Right lobe of liver (tissue), 6 donors: ENCODE measurements at regions of chr4 and their contacts with region 1.

Region 1: DNA sequence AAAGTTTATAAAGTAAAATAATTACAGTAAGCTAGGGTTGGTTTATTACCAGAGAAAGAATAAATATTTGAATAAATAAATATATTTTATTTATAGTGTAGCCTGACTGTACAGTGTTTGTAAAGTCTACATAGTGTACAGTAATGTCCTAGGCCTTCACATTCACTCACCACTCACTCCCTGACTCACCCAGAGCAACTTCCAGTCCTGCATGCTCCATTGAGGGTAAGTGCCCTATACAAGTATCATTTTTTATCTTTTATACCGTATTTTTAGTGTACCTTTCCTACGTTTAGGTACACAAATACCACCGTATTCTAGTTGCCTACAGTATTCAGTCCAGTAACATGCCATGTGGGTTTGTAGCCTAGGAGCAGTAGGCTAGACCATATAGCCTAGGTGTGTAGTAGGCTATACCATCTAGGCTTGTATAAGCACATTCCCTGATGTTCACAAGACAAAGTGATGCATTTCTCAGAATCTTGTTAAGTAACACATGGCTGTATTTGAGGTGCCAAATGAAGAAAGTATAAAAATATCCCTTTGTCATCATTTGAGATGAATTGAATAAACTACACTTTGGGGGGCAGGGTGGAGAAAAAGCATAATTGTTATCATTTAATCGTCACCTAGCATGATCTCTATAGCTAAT is 14.7 kb upstream of the KLHL8 start:
- DNase-seq: no peak
- ATAC-seq: no peak
- H3K4me3 ChIP-seq: peak overlapping the region in 1 of 3 donors; percentile 57
- H3K27ac ChIP-seq: no peak overlapping the region
- H3K4me1 ChIP-seq: no peaks in the 10 kb centered on the region
- H3K27me3 ChIP-seq: no peaks in the 10 kb centered on the region
- CTCF ChIP-seq: no peak
- POLR2A ChIP-seq: no peak

Region 2: DNA sequence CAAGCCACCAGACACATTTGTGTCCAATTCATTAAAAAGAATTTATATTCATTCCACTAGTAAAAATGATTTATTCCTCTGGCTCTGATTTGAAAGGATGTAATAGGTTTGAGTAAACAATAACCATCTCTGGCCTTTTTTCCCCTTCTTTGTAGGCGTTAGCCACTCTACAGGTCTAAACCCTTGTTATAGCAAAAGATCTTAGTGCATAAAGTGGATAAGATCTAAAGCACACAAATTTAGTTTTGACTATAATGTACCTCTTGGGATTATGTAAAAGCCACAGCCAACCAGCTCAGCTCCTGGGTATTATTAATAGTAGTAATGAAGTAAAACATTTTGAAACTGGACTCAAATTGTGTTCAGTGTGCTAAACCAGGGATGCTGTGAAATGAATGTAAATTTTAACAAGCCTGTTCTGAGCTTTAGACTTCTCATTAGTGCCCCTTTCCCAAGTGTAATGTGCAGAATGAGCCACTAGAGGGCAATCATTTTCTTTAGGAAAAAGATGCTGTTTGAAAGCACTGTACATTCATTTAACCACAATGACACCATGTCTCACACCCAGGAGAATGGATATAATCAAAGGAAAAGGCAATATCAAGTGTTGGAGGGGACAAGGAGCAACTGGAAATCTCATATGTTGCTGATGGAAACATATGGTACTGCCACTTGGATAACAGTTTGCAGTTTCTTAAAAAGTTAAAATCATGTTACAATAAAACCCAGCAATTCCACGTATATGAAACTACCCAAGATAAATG is 84.5 kb before region 1 on chr4:
- intact Hi-C with region 1: loop called in 1 of 2 experiments (anchors 10 kb)
- DNase-seq: no peak
- ATAC-seq: peak; percentile 86 to 94 (median 91)
- H3K4me3 ChIP-seq: no peak overlapping the region
- H3K27ac ChIP-seq: no peak overlapping the region
- H3K4me1 ChIP-seq: no peaks in the 10 kb centered on the region
- H3K27me3 ChIP-seq: no peaks in the 10 kb centered on the region
- CTCF ChIP-seq: peak; percentile 84 to 95 (median 86)
- POLR2A ChIP-seq: no peak